WTC11 (cell line): ENCODE measurements at regions of chr17 and their contacts with region 1.

Region 1: DNA sequence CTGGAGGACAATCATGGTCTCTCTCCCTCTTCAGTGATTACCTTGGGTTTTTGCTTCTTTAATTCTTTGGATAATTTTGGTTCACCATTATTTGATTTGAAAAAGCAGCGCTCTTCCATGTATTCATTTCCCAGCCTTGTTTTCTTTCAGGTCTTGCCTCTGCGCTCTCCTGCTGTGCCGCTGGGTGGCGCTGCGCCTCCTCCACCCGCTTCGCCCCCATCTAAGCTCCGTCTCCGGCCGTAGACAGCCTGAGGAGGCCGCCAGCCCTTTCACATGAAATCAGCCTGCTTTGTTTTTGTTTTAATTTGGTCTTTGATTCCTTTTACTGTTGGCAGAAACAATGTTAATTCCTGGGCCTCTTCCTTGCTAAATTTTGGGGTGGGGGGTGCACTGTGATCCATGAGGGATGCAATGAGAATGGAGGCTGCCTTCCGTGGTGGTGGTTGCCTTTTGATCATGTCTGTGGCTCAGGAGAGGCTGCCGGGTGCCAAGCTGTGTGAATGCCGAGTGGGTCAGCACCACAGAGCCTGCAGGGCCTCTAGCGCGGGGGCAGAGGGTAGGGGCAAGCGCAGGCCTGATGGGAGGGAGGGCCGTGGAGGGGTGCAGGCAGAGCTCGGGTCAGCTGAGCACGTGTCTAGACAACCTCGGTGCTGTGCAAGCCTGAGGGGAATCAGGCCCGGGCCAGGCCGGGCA is 64.1 kb downstream of the PLD6 start:
- DNase-seq: peak; percentile 77
- ATAC-seq: peak; percentile 66
- H3K4me3 Mint-ChIP-seq: no peak overlapping the region
- H3K27ac Mint-ChIP-seq: peak overlapping the region; percentile 75
- H3K4me1 Mint-ChIP-seq: peaks cover 10% of the 10 kb centered on the region
- H3K27me3 Mint-ChIP-seq: no peaks in the 10 kb centered on the region
- CTCF ChIP-seq: peak; percentile 92

Region 2: DNA sequence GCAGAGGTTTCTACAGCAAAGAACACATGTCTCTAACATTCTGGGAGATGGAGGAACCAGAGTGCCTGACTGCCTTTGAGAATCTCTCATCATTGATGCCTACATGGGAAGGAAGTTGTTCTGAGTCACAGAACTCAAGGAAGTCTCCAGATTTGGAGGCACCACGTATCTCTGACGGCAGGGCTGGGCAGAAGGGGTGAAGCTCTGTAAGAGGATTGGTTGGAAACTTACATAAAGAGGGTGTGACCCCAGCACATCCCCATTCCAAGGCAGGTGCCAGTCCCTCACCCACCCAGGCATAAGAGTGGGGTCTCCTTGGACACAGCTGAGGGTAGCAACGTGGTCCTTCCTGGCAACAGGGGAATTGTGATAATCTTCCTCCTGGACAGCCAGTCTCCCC is 187.5 kb before region 1 on chr17:
- CTCF ChIA-PET with region 1: no interaction called
- POLR2A ChIA-PET with region 1: no interaction called
- DNase-seq: no peak
- ATAC-seq: no peak
- H3K4me3 Mint-ChIP-seq: no peak overlapping the region
- H3K27ac Mint-ChIP-seq: no peak overlapping the region
- H3K4me1 Mint-ChIP-seq: no peaks in the 10 kb centered on the region
- H3K27me3 Mint-ChIP-seq: peaks cover 3% of the 10 kb centered on the region
- CTCF ChIP-seq: no peak

Region 3: GRCh38 chr17:17028059-17028877 is 113.7 kb before region 1 on chr17:
- CTCF ChIA-PET with region 1: interaction called, 23 read pairs
- POLR2A ChIA-PET with region 1: no interaction called
- DNase-seq: peak; percentile 77
- ATAC-seq: peak; percentile 81
- H3K4me3 Mint-ChIP-seq: peak overlapping the region; percentile 12; the same call in 1 of the 2 replicates
- H3K27ac Mint-ChIP-seq: peak overlapping the region; percentile 92
- H3K4me1 Mint-ChIP-seq: peaks cover 35% of the 10 kb centered on the region
- H3K27me3 Mint-ChIP-seq: no peaks in the 10 kb centered on the region
- CTCF ChIP-seq: no peak

Region 4: GRCh38 chr17:17098426-17099179 is 43.4 kb before region 1 on chr17:
- CTCF ChIA-PET with region 1: interaction called, 21 read pairs
- POLR2A ChIA-PET with region 1: no interaction called
- DNase-seq: no peak
- ATAC-seq: no peak
- H3K4me3 Mint-ChIP-seq: no peak overlapping the region
- H3K27ac Mint-ChIP-seq: peak overlapping the region; percentile 78
- H3K4me1 Mint-ChIP-seq: peaks cover 43% of the 10 kb centered on the region
- H3K27me3 Mint-ChIP-seq: no peaks in the 10 kb centered on the region
- CTCF ChIP-seq: no peak

Region 5: GRCh38 chr17:17119533-17119932 is 22.5 kb before region 1 on chr17:
- CTCF ChIA-PET with region 1: interaction called, 34 read pairs
- POLR2A ChIA-PET with region 1: no interaction called
- DNase-seq: no peak
- ATAC-seq: no peak
- H3K4me3 Mint-ChIP-seq: no peak overlapping the region
- H3K27ac Mint-ChIP-seq: peak overlapping the region; percentile 89
- H3K4me1 Mint-ChIP-seq: peaks cover 9% of the 10 kb centered on the region; the same call in 1 of the 2 replicates
- H3K27me3 Mint-ChIP-seq: no peaks in the 10 kb centered on the region
- CTCF ChIP-seq: no peak

Region 6: DNA sequence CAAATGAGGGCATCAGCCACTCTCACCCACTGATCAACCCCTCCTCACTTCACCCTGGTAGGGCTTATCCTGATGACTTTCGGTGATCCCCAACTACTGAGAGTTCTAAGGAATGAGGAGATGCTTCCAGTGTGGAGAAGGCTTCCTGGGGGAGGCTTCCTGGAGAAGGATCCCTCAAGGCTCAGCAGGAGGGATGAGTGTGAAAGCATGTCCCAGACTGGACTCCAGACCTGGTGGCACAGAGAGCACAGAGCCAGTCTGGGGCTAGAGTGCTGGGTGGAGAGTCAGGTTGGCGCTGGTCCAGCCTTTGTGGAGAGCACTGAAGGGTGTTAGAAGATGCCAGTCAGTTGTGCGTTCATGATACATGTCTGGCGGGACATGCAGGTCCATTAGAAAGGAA is 10.4 kb after region 1 on chr17:
- CTCF ChIA-PET with region 1: interaction called, 21 read pairs
- POLR2A ChIA-PET with region 1: no interaction called
- DNase-seq: no peak
- ATAC-seq: no peak
- H3K4me3 Mint-ChIP-seq: no peak overlapping the region
- H3K27ac Mint-ChIP-seq: peak overlapping the region; percentile 50
- H3K4me1 Mint-ChIP-seq: no peaks in the 10 kb centered on the region
- H3K27me3 Mint-ChIP-seq: no peaks in the 10 kb centered on the region
- CTCF ChIP-seq: no peak

Region 7: DNA sequence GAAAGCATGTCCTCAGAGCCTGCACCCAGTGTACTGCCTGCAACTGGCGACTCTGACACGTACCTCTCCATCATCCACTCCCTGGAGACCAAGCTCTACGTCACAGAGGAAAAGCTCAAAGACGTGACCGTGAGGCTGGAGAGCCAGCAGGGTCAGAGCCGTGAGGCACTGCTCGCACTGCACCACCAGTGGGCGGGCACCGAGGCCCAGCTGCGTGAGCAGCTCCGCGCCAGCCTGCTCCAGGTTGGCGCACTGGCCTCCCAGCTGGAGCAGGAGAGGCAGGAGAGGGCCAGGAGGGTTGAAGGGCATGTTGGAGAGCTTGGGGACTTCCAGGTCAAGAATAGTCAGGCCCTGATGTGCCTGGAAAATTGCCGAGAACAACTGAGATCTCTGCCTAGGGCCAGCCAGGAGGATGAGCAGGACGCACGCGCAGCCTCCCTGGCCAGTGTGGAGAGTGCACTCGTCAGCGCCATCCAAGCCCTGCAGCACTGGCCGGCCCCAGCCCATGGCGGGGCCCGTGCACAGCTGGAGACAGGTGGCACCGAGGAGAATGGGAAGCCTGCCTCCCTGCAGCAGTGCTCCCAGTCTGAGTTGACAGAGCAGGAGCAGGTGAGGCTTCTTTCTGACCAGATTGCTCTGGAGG is 23.8 kb after region 1 on chr17:
- CTCF ChIA-PET with region 1: interaction called, 22 read pairs
- POLR2A ChIA-PET with region 1: no interaction called
- DNase-seq: no peak
- ATAC-seq: no peak
- H3K4me3 Mint-ChIP-seq: no peak overlapping the region
- H3K27ac Mint-ChIP-seq: no peak overlapping the region
- H3K4me1 Mint-ChIP-seq: no peaks in the 10 kb centered on the region
- H3K27me3 Mint-ChIP-seq: no peaks in the 10 kb centered on the region
- CTCF ChIP-seq: no peak

Region 8: DNA sequence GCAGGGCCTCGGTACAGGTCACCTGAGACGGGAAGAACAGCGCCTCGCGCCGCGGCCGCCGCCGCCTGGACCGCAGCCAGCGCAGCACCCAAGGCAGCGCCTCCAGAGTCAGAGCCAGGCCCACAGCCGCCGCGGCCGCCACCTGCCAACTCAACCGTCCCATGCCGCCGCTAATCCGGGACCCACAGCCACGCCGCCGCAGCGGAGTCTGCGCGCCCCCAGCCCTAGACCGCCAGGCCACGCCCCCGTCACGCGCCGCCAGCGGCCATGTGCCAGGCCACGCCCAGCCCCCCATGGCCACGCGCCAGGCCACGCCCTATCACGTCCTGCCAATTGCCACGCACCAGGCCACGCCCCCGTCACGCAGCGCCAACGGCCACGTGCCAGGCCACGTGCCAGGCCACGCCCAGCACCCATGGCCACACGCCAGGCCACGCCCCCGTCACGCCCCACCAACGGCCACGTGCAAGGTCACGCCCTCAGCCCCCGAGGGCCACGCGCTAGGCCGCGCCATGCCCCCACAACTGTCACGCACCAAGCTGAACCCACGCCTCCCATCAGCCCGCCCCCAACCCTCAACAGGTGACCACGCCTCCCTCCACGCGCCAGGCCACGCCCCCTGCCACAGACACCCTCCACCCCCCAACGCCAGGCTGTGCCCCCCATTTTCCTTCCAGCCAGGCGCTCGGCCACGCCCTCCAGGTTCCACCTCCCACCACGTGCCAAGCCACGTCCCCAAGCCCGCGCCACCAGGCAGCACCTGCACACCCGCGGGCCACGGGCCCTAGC is 64.3 kb after region 1 on chr17 and contains the start of gene PLD6:
- CTCF ChIA-PET with region 1: interaction called, 14 read pairs
- POLR2A ChIA-PET with region 1: no interaction called
- DNase-seq: peak; percentile 70
- ATAC-seq: peak; percentile 56
- H3K4me3 Mint-ChIP-seq: peak within 1 kb of the TSS; percentile 68
- H3K27ac Mint-ChIP-seq: no peak within 1 kb of the TSS
- H3K4me1 Mint-ChIP-seq: no peaks in the 10 kb centered on the region
- H3K27me3 Mint-ChIP-seq: peaks cover 7% of the 10 kb centered on the region
- CTCF ChIP-seq: no peak
- total RNA-seq, gene PLD6: 1.2 to 2.6 TPM (median 2.6 TPM) in 3 replicates

Region 9: GRCh38 chr17:17445925-17446665 is 304.1 kb after region 1 on chr17:
- CTCF ChIA-PET with region 1: no interaction called
- POLR2A ChIA-PET with region 1: no interaction called
- DNase-seq: no peak
- ATAC-seq: no peak
- H3K4me3 Mint-ChIP-seq: no peak overlapping the region
- H3K27ac Mint-ChIP-seq: peak overlapping the region; percentile 46; the same call in 1 of the 2 replicates
- H3K4me1 Mint-ChIP-seq: peaks cover 17% of the 10 kb centered on the region
- H3K27me3 Mint-ChIP-seq: peaks cover 17% of the 10 kb centered on the region
- CTCF ChIP-seq: no peak